Activated CD4-positive, alpha-beta T cell treated with anti-CD3 and anti-CD28 coated beads, Interleukin-2, amount 10 ng/mL, durations not matched to agents 24 days and 14 days (primary cell): ENCODE measurements at regions of chr7 and their contacts with region 1.

Region 1: GRCh38 chr7:107462740-107463444 is 7.0 kb upstream of the GPR22 start:
- DNase-seq: peak; percentile 84
- H3K4me3 Mint-ChIP-seq: no peak overlapping the region
- H3K27ac Mint-ChIP-seq: no peak overlapping the region
- H3K4me1 Mint-ChIP-seq: no peaks in the 10 kb centered on the region
- H3K27me3 Mint-ChIP-seq: no peaks in the 10 kb centered on the region

Region 2: GRCh38 chr7:107579885-107580715 is 117.2 kb after region 1 on chr7 and contains the start of gene BCAP29:
- intact Hi-C with region 1: loop called (anchors 5 kb)
- DNase-seq: peak; percentile 92
- H3K4me3 Mint-ChIP-seq: peak within 1 kb of the TSS; percentile 91
- H3K27ac Mint-ChIP-seq: peak within 1 kb of the TSS; percentile 91
- H3K4me1 Mint-ChIP-seq: peaks cover 25% of the 10 kb centered on the region
- H3K27me3 Mint-ChIP-seq: no peaks in the 10 kb centered on the region
- total RNA-seq, gene BCAP29: 43.6 and 52.0 TPM in 2 replicates

Region 3: GRCh38 chr7:107879400-107880035 is 416.6 kb after region 1 on chr7:
- intact Hi-C with region 1: loop called (anchors 2 kb)
- DNase-seq: peak; percentile 79
- H3K4me3 Mint-ChIP-seq: no peak overlapping the region
- H3K27ac Mint-ChIP-seq: no peak overlapping the region
- H3K4me1 Mint-ChIP-seq: peaks cover 15% of the 10 kb centered on the region
- H3K27me3 Mint-ChIP-seq: peaks cover 21% of the 10 kb centered on the region